Left cardiac atrium (tissue), 4 donors: ENCODE measurements at regions of chr18 and their contacts with region 1.

Region 1: DNA sequence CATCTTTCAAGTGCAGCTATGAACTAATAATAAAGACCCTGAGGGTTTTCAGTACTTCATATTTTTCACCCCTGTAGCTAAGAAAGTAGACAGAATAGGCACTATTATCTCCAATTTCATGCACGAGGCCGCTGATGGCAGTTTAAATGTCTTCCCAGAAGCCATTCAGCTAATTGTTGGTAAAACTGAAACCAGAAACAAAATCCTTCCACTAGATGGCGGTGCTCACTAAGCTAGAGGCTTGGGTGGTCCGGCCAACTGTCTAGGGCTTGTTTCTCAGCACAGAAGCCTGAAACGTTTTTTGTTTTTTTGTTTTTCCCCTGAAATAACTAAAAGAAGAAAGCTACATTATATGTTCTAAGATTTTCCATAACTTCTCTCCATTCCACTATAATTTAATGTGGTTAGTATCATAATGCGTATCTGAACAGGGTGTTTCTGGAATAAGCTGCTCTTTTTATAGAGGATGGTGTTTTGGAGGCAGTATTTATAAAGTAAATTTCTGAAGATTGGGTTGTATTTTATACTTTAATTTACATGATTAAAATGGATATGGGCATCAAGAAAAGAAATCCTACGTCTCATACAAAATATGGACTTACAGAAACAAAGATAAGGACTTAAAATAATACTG is 159.4 kb downstream of the PIK3C3 start:
- DNase-seq: peak; percentile 44
- ATAC-seq: peak; percentile 87 to 92

Region 2: DNA sequence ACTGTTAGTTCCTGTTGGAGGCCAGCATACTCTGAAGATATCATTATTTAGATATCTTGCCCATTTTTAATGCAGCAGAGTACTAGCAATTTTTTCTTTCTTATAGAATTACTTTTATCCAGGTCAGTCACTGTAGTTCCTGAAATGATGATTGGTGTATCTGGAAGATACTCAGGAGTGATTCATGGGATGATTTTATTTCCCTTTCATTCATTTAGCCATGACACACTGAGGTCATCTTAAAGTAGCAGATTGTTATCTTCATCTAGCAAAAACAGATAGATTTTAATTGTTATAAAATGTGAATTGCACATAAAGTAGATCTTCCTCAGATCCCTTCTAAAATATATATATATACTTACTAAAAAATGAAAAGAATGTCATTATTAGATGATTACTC is 50.3 kb before region 1 on chr18:
- intact Hi-C with region 1: no loop called
- DNase-seq: no peak
- ATAC-seq: no peak

Region 3: DNA sequence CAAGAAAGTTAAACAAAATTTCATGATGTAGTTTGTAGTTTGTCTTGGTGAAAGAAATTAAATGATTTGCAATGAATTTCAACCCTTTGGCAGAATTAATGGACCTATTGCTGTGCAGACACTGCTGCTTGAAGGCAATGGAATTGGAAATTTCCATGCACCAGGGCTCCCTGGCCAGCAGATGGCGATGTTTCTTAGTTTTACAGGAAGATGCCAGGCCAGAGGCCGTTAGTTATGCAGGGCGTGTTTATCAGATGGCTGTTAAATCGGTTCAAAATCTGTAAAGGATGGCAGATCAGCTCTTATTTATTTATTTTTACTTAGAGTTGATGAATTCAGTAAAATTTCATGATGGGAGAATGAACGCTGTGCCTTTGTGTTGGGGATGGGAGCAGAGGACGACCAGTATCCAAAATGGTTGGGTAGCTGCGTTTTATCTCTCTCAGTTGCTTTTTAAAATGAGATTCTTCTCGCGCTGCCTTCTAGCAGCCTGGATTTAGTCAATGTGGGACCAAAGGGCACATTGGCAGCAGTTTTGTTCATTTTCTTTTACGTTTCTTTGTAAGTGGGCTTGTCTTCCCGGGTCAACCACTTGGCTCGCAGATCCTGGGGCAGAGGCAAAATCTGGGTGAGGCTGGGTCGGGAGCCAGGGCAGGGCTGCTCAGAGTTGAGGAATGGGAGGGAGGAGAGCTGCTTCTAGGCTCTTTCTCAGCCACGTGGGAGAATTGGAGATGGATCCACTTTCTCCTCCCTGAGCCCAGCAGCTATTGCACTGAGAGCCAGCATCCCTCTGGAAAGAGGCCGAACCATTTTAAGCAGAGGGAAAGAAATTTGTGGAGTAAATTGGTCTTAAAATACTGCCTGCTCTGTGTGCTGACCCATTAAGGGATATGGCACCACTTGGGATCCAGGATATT is 184.6 kb after region 1 on chr18:
- intact Hi-C with region 1: loop called in 1 of 2 experiments (anchors 10 kb)
- DNase-seq: peak; percentile 69
- ATAC-seq: peak; percentile 74 to 97

Region 4: GRCh38 chr18:43271593-43272432 is 1157.4 kb after region 1 on chr18:
- intact Hi-C with region 1: loop called in 1 of 2 experiments (anchors 5 kb)
- DNase-seq: no peak
- ATAC-seq: no peak

Region 5: DNA sequence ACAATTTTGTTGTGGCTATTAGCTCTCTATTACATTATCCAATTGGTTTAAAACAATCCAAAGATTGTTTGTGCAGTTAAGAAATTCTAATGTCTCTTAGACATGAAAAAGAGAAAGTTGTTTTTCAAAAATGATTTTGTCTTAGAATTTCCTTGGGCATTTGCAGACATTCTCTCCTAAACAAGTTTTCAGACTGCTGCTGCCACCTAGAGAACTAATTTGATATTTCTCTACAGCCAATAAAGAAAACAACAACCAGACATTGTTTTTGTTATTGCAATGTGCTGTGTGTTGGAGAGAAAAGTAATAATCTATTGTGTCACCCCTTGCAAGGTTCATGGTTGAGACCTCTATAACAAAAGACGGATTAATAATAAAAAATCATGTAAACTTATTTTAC is 1281.8 kb after region 1 on chr18:
- intact Hi-C with region 1: loop called in 1 of 2 experiments (anchors 2 kb)
- DNase-seq: no peak
- ATAC-seq: no peak